Activated naive CD4-positive, alpha-beta T cell treated with anti-CD3 and anti-CD28 coated beads for 36 hours (primary cell): ENCODE measurements at regions of chr2 and their contacts with region 1.

Region 1: DNA sequence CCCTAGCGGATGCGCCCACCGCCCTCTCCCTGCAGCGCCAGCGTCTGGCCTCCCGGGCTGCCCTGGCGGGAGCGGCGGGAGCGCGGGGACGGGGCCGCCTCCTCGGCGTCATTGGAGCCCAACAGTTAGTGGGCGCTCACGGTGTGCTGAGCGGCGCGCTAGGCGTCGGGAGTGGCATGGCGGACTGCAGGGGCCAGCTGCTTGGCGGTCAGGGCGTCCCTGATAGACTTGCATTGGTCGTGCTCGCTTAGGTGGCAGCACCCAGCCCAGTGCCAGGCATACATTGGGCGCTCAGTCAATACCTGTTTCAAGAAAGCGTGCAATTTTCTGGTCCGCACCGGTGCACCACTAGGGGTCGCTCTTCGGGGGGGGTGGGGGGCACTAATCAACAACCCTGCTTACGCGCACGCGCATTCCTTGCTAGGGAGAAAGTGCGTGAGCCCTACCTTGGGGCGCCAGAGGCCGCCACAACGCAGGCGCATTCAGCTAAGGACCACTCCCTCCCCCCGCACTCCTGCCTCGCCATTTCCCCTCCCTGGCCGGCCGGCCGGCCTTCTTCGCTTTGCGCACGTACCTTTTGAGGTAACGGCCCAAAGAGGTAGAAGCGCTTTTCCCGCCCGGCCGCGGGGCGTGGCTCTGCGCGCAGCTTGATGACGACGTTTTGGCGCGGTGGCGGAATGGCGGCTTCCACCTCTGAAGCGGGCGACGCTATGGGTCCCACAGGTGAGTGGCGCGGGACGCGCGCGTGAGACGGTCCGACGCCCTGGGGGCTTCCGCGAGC is 411 bp upstream of the MZT2A start:
- DNase-seq: peak; percentile 95
- H3K4me3 Mint-ChIP-seq: peak overlapping the region; percentile 86
- H3K27ac Mint-ChIP-seq: peak overlapping the region; percentile 85
- H3K4me1 Mint-ChIP-seq: peaks cover 43% of the 10 kb centered on the region
- H3K27me3 Mint-ChIP-seq: no peaks in the 10 kb centered on the region

Region 2: GRCh38 chr2:130342533-130343275 is 1149.9 kb before region 1 on chr2 and contains the start of gene IMP4:
- CTCF ChIA-PET with region 1: no interaction called
- intact Hi-C with region 1: loop called (anchors 2 kb)
- DNase-seq: peak; percentile 97
- H3K4me3 Mint-ChIP-seq: peak within 1 kb of the TSS; percentile 99
- H3K27ac Mint-ChIP-seq: peak within 1 kb of the TSS; percentile 100
- H3K4me1 Mint-ChIP-seq: peaks cover 40% of the 10 kb centered on the region
- H3K27me3 Mint-ChIP-seq: no peaks in the 10 kb centered on the region
- total RNA-seq, gene IMP4: 120 to 128 TPM

Region 3: DNA sequence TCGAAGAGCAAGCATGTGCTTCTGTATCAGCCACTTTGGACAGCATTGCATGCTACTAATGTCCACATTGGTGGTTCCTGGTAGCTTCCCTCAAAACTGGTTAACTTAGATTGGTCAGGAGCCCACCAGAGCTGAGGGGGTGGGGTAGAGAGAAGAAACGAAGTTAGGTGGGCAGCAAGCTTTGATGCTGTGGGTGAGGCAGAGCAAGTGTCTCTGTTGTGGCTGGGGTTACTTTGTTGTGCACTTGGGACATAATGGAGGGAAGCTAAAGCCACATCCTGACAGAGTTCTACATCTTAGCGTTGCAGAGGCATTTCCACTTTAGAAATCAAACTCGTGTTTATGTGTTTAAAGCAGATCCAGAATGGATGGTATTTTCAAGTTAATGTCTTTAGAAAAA is 482.0 kb before region 1 on chr2:
- CTCF ChIA-PET with region 1: no interaction called
- intact Hi-C with region 1: no loop called
- DNase-seq: no peak
- H3K4me3 Mint-ChIP-seq: no peak overlapping the region
- H3K27ac Mint-ChIP-seq: no peak overlapping the region
- H3K4me1 Mint-ChIP-seq: peaks cover 17% of the 10 kb centered on the region
- H3K27me3 Mint-ChIP-seq: peaks cover 4% of the 10 kb centered on the region

Region 4: DNA sequence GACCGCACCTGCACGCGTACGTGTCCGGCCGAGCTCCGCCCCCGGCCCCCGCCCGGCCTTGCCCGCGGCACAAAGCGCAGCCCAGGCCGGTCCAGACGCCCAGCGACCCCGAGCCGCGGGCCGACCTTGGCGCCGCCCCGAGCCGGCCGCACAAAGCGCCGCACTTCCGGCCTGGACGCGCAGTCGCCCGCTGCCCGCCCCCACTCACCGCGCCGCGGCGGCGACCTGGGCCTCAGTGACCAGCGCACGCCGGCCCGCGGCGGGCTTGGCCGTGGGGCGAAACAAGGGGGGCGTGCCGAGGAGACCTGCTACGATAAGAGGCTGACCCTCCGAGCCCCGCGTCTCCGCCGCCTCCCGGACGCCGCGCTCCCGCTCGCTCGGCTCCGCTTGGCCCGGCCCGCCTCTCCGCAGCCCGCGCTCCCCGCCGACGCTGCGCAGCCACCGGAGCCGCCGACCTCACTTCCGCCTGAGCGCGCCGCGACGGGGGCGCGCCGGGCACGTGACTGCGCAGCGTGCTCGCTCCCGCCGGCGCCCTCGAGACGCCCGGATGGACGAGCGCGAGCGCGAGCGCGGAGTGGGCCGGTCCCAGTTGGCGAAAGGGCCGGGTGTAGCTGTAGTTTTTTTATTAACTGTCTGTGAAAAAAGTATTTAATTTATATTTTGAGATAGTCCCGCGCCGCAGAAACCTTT is 399.5 kb before region 1 on chr2 and contains the start of gene FAM168B:
- CTCF ChIA-PET with region 1: interaction called, 5 read pairs
- intact Hi-C with region 1: loop called (anchors 1 kb)
- DNase-seq: peak; percentile 86
- H3K4me3 Mint-ChIP-seq: peak within 1 kb of the TSS; percentile 85
- H3K27ac Mint-ChIP-seq: peak within 1 kb of the TSS; percentile 92
- H3K4me1 Mint-ChIP-seq: peaks cover 20% of the 10 kb centered on the region
- H3K27me3 Mint-ChIP-seq: no peaks in the 10 kb centered on the region
- total RNA-seq, gene FAM168B: 52.7 to 55.0 TPM

Region 5: GRCh38 chr2:131413148-131413747 is 79.4 kb before region 1 on chr2:
- CTCF ChIA-PET with region 1: interaction called, 6 read pairs
- intact Hi-C with region 1: loop called (anchors 1 kb)
- DNase-seq: peak; percentile 49
- H3K4me3 Mint-ChIP-seq: no peak overlapping the region
- H3K27ac Mint-ChIP-seq: no peak overlapping the region
- H3K4me1 Mint-ChIP-seq: no peaks in the 10 kb centered on the region
- H3K27me3 Mint-ChIP-seq: peaks cover 23% of the 10 kb centered on the region

Region 6: DNA sequence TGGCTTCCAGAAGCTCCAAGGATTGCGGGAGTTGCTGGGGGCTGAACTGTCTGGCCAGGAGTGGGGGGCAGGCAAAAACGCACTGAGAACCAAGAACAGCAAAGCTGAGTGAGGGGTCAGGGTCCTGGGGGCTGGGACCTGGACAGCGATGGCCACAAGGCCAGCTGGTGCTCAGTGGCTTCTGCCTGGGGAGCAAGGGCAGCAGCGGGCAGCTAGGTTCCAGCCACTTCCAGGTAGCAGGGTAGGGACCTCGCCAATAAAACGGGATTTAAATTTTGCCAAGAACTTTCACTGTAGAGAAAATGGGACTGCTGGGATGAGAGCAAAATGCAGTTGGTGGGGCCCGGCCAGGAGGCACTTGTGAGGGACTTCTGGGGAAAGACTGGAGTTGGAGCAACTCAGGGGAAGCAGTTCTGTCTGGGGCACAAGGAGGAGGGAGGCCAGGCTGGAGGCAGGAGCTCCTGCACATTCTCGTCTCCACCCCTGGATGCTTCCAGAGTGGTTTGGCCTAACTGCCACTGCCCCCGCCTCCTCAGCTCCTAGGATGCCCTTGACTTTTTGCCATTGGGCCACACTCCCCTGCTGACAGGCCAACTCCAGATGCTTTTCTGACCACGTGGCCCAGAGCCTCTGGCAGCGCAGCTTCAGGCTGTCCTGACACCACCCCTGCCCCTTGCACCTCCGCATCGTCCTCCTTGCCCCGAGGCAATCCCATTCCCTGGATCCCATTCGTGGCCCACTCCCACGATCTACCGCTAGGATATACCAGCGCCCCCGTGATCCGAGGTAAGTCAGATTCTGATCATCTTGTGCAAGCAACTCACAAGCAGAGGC is 29.6 kb after region 1 on chr2:
- CTCF ChIA-PET with region 1: interaction called, 14 read pairs
- intact Hi-C with region 1: loop called (anchors 1 kb)
- DNase-seq: no peak
- H3K4me3 Mint-ChIP-seq: no peak overlapping the region
- H3K27ac Mint-ChIP-seq: no peak overlapping the region
- H3K4me1 Mint-ChIP-seq: no peaks in the 10 kb centered on the region
- H3K27me3 Mint-ChIP-seq: no peaks in the 10 kb centered on the region